CD14-positive monocyte (primary cell): ENCODE measurements at regions of chr18 and their contacts with region 1.

Region 1: GRCh38 chr18:9708057-9708433 is at the start of gene RAB31:
- DNase-seq: peak; percentile 64 to 79 (median 72)
- H3K4me3 ChIP-seq: peak within 1 kb of the TSS; percentile 67 to 98 (median 84)
- H3K4me3 Mint-ChIP-seq: peak within 1 kb of the TSS; percentile 98 to 99
- H3K27ac ChIP-seq: peak within 1 kb of the TSS; percentile 94 to 95
- H3K27ac Mint-ChIP-seq: peak within 1 kb of the TSS; percentile 94 to 97 (median 95)
- H3K4me1 ChIP-seq: peaks cover 63 to 69% of the 10 kb centered on the region in 2 donors
- H3K4me1 Mint-ChIP-seq: peaks cover 69% of the 10 kb centered on the region
- H3K27me3 ChIP-seq: no peaks in the 10 kb centered on the region
- H3K27me3 Mint-ChIP-seq: peaks cover 0 to 5% (median 1%) of the 10 kb centered on the region in 3 donors
- CTCF ChIP-seq: no peak
- polyA plus RNA-seq, gene RAB31: 106 to 367 (median 348) TPM

Region 2: GRCh38 chr18:9614401-9615279 is 93.4 kb before region 1 on chr18 and contains the start of gene PPP4R1:
- intact Hi-C with region 1: loop called (anchors 10 kb)
- DNase-seq: peak; percentile 45 to 56 (median 55)
- H3K4me3 ChIP-seq: peak within 1 kb of the TSS; percentile 58 to 78 (median 60)
- H3K4me3 Mint-ChIP-seq: peak within 1 kb of the TSS; percentile 96 to 99
- H3K27ac ChIP-seq: peak within 1 kb of the TSS; percentile 76 to 86
- H3K27ac Mint-ChIP-seq: peak within 1 kb of the TSS; percentile 89 to 97 (median 94)
- H3K4me1 ChIP-seq: peaks cover 27 to 39% of the 10 kb centered on the region in 2 donors
- H3K4me1 Mint-ChIP-seq: peaks cover 43% of the 10 kb centered on the region
- H3K27me3 ChIP-seq: no peaks in the 10 kb centered on the region
- H3K27me3 Mint-ChIP-seq: no peaks in the 10 kb centered on the region
- CTCF ChIP-seq: no peak
- polyA plus RNA-seq, gene PPP4R1: 22.0 to 45.3 (median 24.6) TPM

Region 3: DNA sequence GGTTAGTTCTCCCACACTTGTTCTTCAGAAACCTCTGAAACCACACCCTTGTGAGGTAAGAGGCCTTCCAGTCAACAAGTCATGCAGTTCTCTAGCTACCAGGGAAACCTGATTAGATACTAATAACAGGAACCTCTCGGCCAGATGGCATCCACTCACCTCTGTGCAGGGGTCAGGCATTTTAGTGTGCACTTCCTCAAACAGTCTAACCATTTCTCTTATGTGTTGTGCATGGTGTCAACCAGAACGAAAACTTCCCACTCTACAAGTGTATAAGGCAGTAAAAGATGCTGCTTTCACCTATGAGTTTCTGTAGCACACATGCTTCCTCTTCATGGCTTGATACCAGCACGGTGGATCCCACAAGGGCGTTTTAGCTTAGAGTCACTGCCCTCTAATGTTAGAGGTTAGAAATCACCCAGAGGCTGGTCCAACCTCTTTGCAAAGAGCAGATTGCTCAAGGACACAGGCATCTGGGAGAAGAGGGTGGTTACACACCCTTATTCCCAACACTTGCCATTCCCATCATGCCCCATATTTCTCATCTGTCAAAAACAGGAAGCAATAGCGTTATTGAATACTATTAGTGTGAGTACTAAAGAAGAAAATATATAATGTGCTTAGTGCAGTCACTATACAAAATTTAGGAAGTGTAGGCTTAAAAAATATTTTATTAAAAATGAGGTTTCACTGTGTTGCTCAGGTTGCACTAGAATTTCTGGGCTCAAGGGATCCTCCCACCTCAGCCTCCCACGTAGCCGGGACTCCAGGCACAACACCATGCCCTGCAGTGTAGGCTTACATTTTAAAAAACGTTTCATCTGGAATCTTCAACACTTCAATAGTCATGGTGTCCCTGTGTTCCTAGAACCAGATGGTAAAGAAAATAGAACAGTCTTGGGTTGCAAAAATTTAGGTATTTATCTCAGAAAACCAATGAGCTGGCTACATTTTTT is 34.5 kb before region 1 on chr18:
- intact Hi-C with region 1: loop called in 1 of 2 experiments (anchors 5 kb)
- DNase-seq: peak; percentile 65 to 69 (median 67)
- H3K4me3 ChIP-seq: no peak overlapping the region
- H3K4me3 Mint-ChIP-seq: peak overlapping the region in 1 of 2 donors; percentile 30
- H3K27ac ChIP-seq: peak overlapping the region in 1 of 2 donors; percentile 37
- H3K27ac Mint-ChIP-seq: peak overlapping the region; percentile 60 to 85 (median 73)
- H3K4me1 ChIP-seq: peaks cover 7 to 13% of the 10 kb centered on the region in 2 donors
- H3K4me1 Mint-ChIP-seq: peaks cover 7% of the 10 kb centered on the region
- H3K27me3 ChIP-seq: no peaks in the 10 kb centered on the region
- H3K27me3 Mint-ChIP-seq: no peaks in the 10 kb centered on the region
- CTCF ChIP-seq: peak; percentile 15

Region 4: DNA sequence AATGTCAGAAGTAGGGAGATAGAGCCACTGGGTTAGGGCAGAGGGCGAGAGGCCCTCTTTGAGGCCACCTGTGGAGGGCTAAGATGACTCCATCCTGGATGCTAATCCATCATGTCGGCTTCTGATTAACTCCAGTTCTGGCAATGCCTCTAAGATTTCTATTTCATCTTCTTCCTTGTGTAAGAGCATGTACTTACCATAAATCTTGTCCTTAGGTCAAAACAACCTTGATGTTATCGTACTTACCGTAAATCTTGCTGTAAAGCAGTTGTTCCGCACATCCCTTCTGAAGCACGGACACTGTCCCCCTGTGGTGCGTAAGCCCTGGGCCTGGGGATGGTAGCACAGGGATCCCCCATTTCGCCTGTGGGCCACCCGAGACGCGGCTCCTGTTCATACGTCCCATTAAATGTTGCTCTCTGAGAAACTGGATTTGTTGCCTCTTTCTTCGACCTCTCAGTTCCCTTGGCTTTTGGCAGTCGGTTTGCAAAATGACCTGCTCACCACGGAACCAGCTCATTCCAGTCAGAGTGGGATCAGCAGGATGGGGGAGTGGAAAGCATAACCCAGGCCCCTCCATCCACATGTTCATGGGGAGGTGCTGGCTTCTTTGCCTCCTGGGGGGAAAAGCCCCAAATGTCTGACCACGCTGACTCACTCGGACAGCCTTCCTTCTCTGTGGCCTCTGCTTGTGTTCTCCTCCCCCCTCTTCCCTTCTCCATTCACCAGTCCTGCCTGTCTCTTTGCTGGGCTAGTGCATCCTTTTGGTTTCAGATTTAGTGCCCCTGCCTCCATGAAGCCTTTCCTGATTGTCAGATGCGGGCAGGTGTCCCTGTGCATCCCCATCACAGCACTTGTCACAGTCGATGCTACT is 49.9 kb after region 1 on chr18:
- intact Hi-C with region 1: loop called in 1 of 2 experiments (anchors 10 kb)
- DNase-seq: peak; percentile 59 to 84 (median 67)
- H3K4me3 ChIP-seq: no peak overlapping the region
- H3K4me3 Mint-ChIP-seq: peak overlapping the region; percentile 16 to 47
- H3K27ac ChIP-seq: peak overlapping the region; percentile 32 to 84
- H3K27ac Mint-ChIP-seq: peak overlapping the region; percentile 55 to 93 (median 87)
- H3K4me1 ChIP-seq: peaks cover 90 to 92% of the 10 kb centered on the region in 2 donors
- H3K4me1 Mint-ChIP-seq: peaks cover 99% of the 10 kb centered on the region
- H3K27me3 ChIP-seq: no peaks in the 10 kb centered on the region
- H3K27me3 Mint-ChIP-seq: peaks cover 0 to 2% (median 0%) of the 10 kb centered on the region in 3 donors
- CTCF ChIP-seq: no peak

Region 5: GRCh38 chr18:9771261-9771976 is 63.4 kb after region 1 on chr18:
- intact Hi-C with region 1: loop called in 1 of 2 experiments (anchors 5 kb)
- DNase-seq: peak; percentile 73 to 92 (median 89)
- H3K4me3 ChIP-seq: peak overlapping the region in 2 of 3 experiments; percentile 9 to 58
- H3K4me3 Mint-ChIP-seq: peak overlapping the region; percentile 73 to 89
- H3K27ac ChIP-seq: peak overlapping the region; percentile 95 to 97
- H3K27ac Mint-ChIP-seq: peak overlapping the region; percentile 98 to 99 (median 99)
- H3K4me1 ChIP-seq: peaks cover 73 to 79% of the 10 kb centered on the region in 2 donors
- H3K4me1 Mint-ChIP-seq: peaks cover 94% of the 10 kb centered on the region
- H3K27me3 ChIP-seq: no peaks in the 10 kb centered on the region
- H3K27me3 Mint-ChIP-seq: peaks cover 1% of the 10 kb centered on the region in 3 donors
- CTCF ChIP-seq: peak; percentile 100

Region 6: GRCh38 chr18:9782073-9782857 is 74.2 kb after region 1 on chr18:
- intact Hi-C with region 1: loop called in 1 of 2 experiments (anchors 5 kb)
- DNase-seq: peak; percentile 80 to 91 (median 84)
- H3K4me3 ChIP-seq: peak overlapping the region in 1 of 3 experiments; percentile 14
- H3K4me3 Mint-ChIP-seq: no peak overlapping the region
- H3K27ac ChIP-seq: peak overlapping the region; percentile 79 to 86
- H3K27ac Mint-ChIP-seq: peak overlapping the region; percentile 89 to 96 (median 92)
- H3K4me1 ChIP-seq: peaks cover 50 to 68% of the 10 kb centered on the region in 2 donors
- H3K4me1 Mint-ChIP-seq: peaks cover 64% of the 10 kb centered on the region
- H3K27me3 ChIP-seq: no peaks in the 10 kb centered on the region
- H3K27me3 Mint-ChIP-seq: peaks cover 0 to 3% (median 0%) of the 10 kb centered on the region in 3 donors
- CTCF ChIP-seq: no peak

Region 7: DNA sequence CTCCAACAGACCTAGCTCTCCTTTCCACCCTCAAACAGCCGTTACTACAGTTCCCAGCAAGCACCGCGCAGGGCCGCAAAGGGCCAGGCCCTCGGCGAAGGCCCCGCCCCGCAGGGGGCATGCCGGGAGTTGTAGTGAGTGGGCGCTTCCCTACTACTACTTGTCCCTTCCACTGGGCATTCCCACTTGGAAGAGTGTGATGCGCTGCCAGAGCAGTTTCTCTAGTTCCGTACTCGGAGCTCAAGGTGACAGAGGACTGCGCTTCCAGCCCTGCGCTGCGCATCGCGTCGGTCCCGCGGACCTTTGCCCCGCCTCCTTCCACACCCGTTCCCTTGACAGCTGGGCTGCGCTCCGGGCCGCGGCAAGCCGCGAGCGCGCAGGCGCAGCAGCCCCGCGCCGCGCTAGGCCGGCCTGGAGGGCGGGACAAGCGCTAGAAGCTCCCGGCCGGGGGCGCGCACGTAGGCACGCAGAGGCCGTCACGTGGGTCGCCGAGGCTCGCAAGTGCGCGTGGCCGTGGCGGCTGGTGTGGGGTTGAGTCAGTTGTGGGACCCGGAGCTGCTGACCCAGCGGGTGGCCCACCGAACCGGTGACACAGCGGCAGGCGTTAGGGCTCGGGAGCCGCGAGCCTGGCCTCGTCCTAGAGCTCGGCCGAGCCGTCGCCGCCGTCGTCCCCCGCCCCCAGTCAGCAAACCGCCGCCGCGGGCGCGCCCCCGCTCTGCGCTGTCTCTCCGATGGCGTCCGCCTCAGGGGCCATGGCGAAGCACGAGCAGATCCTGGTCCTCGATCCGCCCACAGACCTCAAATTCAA is 205.7 kb after region 1 on chr18 and contains the start of gene VAPA:
- intact Hi-C with region 1: loop called (anchors 10 kb)
- DNase-seq: peak; percentile 95 to 99 (median 97)
- H3K4me3 ChIP-seq: peak within 1 kb of the TSS; percentile 87 to 98 (median 95)
- H3K4me3 Mint-ChIP-seq: peak within 1 kb of the TSS; percentile 83 to 95
- H3K27ac ChIP-seq: peak within 1 kb of the TSS; percentile 80 to 97
- H3K27ac Mint-ChIP-seq: peak within 1 kb of the TSS; percentile 91 to 98 (median 97)
- H3K4me1 ChIP-seq: peaks cover 36 to 62% of the 10 kb centered on the region in 2 donors
- H3K4me1 Mint-ChIP-seq: peaks cover 41% of the 10 kb centered on the region
- H3K27me3 ChIP-seq: no peaks in the 10 kb centered on the region
- H3K27me3 Mint-ChIP-seq: no peaks in the 10 kb centered on the region
- CTCF ChIP-seq: no peak
- polyA plus RNA-seq, gene VAPA: 106 to 393 (median 334) TPM